CD14-positive monocyte (primary cell): ENCODE measurements at regions of chr15 and their contacts with region 1.

Region 1: DNA sequence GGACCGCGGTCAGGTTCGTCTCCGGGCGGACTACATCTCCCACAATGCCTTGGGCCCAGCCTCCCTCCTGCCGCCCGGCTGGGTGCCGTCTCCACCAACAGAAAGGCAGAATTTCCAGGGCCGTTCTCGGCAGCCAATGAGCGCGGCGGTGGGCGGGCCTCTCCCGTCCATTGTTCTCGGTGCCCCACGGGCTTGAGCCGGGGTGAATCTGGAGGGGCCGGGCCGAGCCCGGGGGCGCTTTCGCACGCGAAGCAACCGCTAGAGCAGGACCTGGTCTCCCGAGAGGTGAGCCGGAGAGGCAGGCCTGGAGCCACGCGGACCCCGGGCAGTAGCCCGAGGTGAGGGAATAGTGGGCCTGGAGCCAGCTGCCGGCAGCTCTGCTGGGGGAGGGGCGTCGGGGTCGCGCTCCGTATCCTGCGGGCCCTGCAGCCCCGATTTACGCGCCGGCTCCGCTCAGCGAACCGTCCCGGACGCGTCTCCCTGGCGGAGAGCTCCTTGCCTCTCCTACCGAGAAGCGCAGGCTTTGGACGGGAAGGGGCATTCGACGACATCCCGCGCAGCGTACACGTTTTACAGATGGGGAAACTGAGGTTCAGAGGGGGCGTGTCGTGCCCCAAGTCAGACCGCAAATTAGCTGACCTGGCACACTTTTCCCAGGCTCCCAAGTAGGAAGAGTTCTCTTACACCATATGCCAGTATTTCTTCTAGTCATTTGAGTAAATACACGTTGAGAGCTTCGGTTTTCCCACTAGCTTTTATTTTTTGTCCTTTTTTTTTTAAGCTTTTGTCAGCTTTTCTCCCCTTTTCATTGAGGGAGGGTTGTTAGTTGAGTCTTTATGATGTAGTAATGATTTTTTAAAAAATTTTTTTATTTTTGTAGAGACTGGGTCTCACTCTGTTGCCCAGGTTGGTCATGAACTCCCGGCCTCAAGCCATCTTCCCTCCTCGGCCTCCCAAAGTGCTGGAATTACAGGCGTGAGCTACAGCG is at the start of gene ZSCAN2:
- DNase-seq: peak; percentile 82 to 90 (median 87)
- H3K4me3 ChIP-seq: peak within 1 kb of the TSS; percentile 78 to 95 (median 88)
- H3K4me3 Mint-ChIP-seq: peak within 1 kb of the TSS; percentile 95 to 98
- H3K27ac ChIP-seq: peak within 1 kb of the TSS; percentile 11 to 74
- H3K27ac Mint-ChIP-seq: peak within 1 kb of the TSS; percentile 69 to 95 (median 80)
- H3K4me1 ChIP-seq: peaks cover 42 to 55% of the 10 kb centered on the region in 2 donors
- H3K4me1 Mint-ChIP-seq: peaks cover 65% of the 10 kb centered on the region
- H3K27me3 ChIP-seq: no peaks in the 10 kb centered on the region
- H3K27me3 Mint-ChIP-seq: no peaks in the 10 kb centered on the region
- CTCF ChIP-seq: no peak
- polyA plus RNA-seq, gene ZSCAN2: 1.7 to 6.1 (median 3.4) TPM

Region 2: GRCh38 chr15:84631706-84632272 is 30.6 kb after region 1 on chr15:
- intact Hi-C with region 1: loop called in 1 of 2 experiments (anchors 1 kb)
- DNase-seq: no peak
- H3K4me3 ChIP-seq: peak overlapping the region; percentile 51 to 92 (median 84)
- H3K4me3 Mint-ChIP-seq: peak overlapping the region; percentile 93 to 99
- H3K27ac ChIP-seq: peak overlapping the region; percentile 33 to 83
- H3K27ac Mint-ChIP-seq: peak overlapping the region in 6 of 7 donors; percentile 88 to 98 (median 93)
- H3K4me1 ChIP-seq: peaks cover 30 to 48% of the 10 kb centered on the region in 2 donors
- H3K4me1 Mint-ChIP-seq: peaks cover 40% of the 10 kb centered on the region
- H3K27me3 ChIP-seq: no peaks in the 10 kb centered on the region
- H3K27me3 Mint-ChIP-seq: no peaks in the 10 kb centered on the region
- CTCF ChIP-seq: no peak